ENCODE measurements at regions of chr2 and their contacts with region 1.

Region 1: GRCh38 chr2:65366595-65367125 is 65.7 kb downstream of the SPRED2 start:
- DNase-seq: peak; percentile 97
- H3K4me3 Mint-ChIP-seq: peak overlapping the region; percentile 37
- H3K27ac Mint-ChIP-seq: peak overlapping the region; percentile 73
- H3K4me1 Mint-ChIP-seq: peaks cover 58% of the 10 kb centered on the region
- H3K27me3 Mint-ChIP-seq: no peaks in the 10 kb centered on the region
- CTCF ChIP-seq: no peak

Region 2: DNA sequence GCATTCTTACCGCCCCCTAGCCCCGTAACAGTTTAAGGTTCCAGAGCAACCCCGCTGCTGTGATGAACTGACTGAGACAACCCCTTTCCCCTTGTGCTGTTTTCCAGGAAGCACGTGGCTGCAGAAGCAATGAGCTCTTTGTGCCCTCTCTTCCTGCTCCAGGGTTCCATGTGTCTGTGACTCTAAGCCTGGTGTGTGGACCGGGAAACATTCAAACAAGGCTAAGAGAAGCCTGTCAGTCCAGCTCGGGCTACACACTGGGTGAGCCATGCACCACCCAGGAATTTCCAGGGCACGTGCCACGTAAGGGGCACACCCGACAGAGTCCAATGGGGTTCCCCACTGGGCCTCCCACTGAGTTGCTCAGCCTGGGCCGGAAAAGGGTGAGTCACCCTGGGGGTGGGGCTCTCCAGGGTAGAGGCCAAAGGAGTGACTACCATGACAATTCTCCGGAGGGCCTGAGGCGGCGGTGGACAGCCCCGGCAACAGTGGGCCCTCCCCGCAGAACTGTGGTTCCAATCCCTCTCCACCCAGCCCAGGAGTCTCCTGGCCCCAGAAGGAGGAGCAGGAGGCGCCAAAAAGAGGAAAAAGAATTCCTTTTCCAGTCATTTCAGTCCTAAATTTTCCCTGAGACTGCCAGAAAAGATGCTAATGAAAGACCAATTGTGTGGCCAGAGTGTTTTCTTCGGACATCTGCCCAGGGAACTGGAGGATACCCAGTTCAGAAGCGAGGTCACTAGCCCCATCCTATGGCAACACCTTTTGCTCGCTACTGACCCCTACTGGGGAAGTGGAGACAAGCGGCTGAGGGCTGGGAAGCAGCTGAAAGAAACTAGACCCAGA is 535.3 kb before region 1 on chr2:
- CTCF ChIA-PET with region 1: no interaction called
- POLR2A ChIA-PET with region 1: no interaction called
- intact Hi-C with region 1: no loop called
- DNase-seq: peak; percentile 98
- H3K4me3 Mint-ChIP-seq: peak overlapping the region; percentile 23
- H3K27ac Mint-ChIP-seq: peak overlapping the region; percentile 91
- H3K4me1 Mint-ChIP-seq: peaks cover 30% of the 10 kb centered on the region
- H3K27me3 Mint-ChIP-seq: no peaks in the 10 kb centered on the region
- CTCF ChIP-seq: peak; percentile 85

Region 3: DNA sequence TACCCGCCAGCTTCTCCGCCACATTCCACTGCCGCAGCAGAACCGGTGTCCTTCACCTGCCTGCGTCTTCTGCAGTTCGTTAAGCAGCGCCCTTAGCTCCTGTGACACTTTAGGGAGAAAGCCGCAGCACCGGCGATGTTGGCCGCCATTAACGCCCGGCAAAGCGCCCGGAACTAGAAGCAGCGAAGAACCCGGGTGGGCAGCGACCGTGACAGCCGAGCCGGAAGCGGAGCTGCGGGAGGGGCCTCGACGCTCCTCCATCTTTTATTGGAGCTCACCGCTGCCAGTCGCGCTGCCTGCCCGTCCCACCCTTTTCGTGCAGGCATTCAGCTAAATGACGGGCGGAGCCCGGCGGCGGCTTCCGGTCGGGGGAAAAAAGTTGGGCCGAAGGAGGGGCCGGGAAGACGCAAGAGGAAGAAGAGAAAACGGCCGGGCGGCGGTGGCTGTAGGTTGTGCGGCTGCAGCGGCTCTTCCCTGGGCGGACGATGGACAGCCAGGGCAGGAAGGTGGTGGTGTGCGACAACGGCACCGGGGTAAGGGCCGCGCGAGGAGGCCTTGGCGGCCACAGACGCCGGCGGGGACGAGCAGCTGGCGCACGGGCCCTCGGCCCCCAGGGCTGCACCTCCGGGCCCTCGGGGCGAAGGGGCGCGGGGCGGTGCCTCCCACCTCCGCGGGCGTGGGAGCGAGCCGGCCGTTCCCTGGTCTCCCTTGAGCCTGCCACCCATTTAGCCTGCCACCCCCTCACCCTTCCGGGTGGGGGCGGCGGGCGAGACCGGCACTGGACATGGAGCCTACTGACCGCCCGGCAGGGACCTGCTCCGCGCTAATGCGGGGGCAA is 139.0 kb before region 1 on chr2 and contains the start of gene ACTR2:
- CTCF ChIA-PET with region 1: no interaction called
- POLR2A ChIA-PET with region 1: interaction called, 15 read pairs
- intact Hi-C with region 1: no loop called
- DNase-seq: peak; percentile 94
- H3K4me3 Mint-ChIP-seq: peak within 1 kb of the TSS; percentile 97
- H3K27ac Mint-ChIP-seq: peak within 1 kb of the TSS; percentile 100
- H3K4me1 Mint-ChIP-seq: peaks cover 10% of the 10 kb centered on the region
- H3K27me3 Mint-ChIP-seq: no peaks in the 10 kb centered on the region
- CTCF ChIP-seq: no peak
- total RNA-seq, gene ACTR2: 263 and 273 TPM in 2 replicates

Region 4: DNA sequence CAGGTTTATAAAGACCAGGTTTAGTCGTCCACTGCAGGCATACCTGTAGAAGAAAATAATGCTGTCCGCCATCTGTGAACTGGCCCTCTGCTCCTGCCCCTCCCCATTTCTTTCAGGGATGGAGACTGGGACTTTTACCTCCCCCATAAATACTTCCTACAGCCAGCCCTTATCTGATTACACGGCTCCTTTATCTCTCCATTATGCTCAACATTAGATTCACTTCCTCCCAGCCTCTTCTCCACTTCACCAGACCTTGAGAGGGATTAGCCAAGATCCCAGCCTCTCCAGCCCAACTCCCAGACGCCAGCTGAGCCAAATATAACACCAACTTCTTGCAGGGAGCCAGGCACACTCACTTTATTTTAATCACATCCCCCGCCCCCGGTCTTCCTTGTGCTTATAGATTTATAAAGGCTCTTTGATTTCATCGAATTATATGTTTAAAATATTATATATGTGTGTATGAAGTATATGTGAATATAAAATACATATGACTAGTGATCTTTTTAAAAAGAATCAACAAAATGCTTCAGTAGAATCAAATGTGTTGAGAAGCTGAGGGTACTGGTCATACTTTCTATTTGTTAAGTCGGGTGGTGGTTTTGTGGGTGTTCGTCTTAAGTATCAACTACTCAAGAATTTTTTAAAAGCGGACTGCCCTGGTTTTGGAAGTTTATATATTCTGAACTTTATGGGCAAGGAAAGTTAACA is 15.3 kb before region 1 on chr2:
- CTCF ChIA-PET with region 1: interaction called, 4 read pairs
- POLR2A ChIA-PET with region 1: interaction called, 47 read pairs
- intact Hi-C with region 1: no loop called
- DNase-seq: no peak
- H3K4me3 Mint-ChIP-seq: no peak overlapping the region
- H3K27ac Mint-ChIP-seq: no peak overlapping the region
- H3K4me1 Mint-ChIP-seq: peaks cover 43% of the 10 kb centered on the region
- H3K27me3 Mint-ChIP-seq: no peaks in the 10 kb centered on the region
- CTCF ChIP-seq: no peak

Region 5: DNA sequence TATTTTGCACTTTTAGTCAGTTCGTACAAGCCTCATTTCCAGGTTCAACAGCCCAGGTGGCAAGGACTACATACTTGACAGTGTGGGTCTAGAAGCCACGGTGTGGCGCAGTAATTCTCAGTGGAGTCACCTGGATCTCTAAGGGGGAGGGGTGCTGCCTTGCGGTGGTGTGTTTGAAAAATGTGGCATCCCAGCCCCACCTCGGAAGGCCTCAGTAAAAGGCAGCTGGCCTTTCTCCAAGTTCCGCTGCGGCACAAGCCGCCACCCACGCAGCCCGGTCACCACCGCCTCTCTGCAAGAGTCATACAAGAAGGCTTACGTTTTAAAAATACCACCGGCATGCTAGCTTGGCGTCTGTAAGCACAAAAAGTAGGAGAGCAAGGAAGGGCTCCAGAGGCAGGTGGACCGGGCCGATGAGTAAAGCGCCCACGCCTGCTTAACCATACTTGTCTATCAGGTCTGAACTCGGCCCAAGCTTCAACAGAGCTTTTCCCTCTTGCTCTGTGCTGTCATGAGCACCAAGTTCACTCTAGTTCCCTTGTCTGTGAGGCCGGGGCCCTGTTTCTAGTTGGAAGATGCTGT is 16.2 kb after region 1 on chr2:
- CTCF ChIA-PET with region 1: interaction called, 6 read pairs
- POLR2A ChIA-PET with region 1: interaction called, 67 read pairs
- intact Hi-C with region 1: loop called (anchors 1 kb)
- DNase-seq: peak; percentile 94
- H3K4me3 Mint-ChIP-seq: peak overlapping the region; percentile 59
- H3K27ac Mint-ChIP-seq: peak overlapping the region; percentile 81
- H3K4me1 Mint-ChIP-seq: peaks cover 60% of the 10 kb centered on the region
- H3K27me3 Mint-ChIP-seq: no peaks in the 10 kb centered on the region
- CTCF ChIP-seq: no peak

Region 6: GRCh38 chr2:65396348-65397026 is 29.8 kb after region 1 on chr2:
- CTCF ChIA-PET with region 1: interaction called, 3 read pairs
- POLR2A ChIA-PET with region 1: interaction called, 10 read pairs
- intact Hi-C with region 1: no loop called
- DNase-seq: no peak
- H3K4me3 Mint-ChIP-seq: no peak overlapping the region
- H3K27ac Mint-ChIP-seq: peak overlapping the region; percentile 61
- H3K4me1 Mint-ChIP-seq: peaks cover 47% of the 10 kb centered on the region
- H3K27me3 Mint-ChIP-seq: no peaks in the 10 kb centered on the region
- CTCF ChIP-seq: no peak

Measured in MCF 10A (cell line).